A549 (cell line): ENCODE measurements at regions of chr3 and their contacts with region 1.

Region 1: DNA sequence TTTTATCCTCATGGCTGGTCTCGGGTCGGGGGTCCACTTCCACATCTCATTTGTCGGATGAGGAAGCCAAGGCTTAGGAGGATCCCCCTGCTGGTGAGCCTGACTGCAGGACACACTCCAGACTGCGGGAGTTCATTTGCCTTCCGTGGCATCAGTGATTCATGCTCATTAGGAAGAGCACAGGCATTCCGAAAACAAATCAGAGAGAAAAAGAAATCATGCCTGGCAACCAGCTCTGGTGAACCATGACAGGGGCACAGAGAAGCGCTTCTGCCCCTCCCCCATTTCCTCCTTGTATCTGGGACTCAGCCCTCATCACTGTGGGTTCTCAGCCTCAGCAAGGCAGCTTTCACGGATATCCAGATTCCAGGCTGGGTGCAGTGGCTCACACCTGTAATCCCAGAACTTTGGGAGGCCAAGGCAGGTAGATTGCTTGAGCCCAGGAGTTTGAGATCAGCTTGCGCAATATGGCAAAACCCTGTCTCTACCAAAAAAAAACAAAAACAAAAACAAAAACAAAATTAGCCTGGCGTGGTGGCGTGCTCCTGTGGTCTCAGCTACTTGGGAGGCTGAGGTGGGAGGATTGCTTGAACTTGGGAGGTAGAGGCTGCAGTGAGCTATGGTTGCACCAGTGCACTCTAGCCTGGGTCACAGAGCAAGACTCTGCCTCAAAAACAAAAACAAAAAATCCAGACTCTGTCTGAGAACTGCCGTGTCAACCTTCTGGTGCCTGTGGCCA is 28.4 kb downstream of the IRAK2 start:
- DNase-seq: peak; percentile 60 to 82
- ATAC-seq: peak; percentile 51 to 70
- H3K4me3 ChIP-seq: no peak overlapping the region
- H3K27ac ChIP-seq: peak overlapping the region; percentile 88
- H3K4me1 ChIP-seq: peaks cover 76% of the 10 kb centered on the region
- CTCF ChIP-seq: peak; percentile 47
- EP300 ChIP-seq: no peak
- POLR2A ChIP-seq: no peak
- RAD21 ChIP-seq: peak; percentile 10 to 34; a peak in 2 of 5 replicates

Region 2: GRCh38 chr3:10142707-10143566 is 50.2 kb before region 1 on chr3:
- CTCF ChIA-PET with region 1: interaction called, 3 read pairs
- POLR2A ChIA-PET with region 1: interaction called, 11 read pairs
- DNase-seq: peak; percentile 26 to 35
- ATAC-seq: peak in 1 of 2 experiments; percentile 12; a peak in 3 of 6 replicates
- H3K4me3 ChIP-seq: peak overlapping the region; percentile 87
- H3K27ac ChIP-seq: peak overlapping the region; percentile 90 to 97
- H3K4me1 ChIP-seq: peaks cover 15% of the 10 kb centered on the region
- CTCF ChIP-seq: no peak
- EP300 ChIP-seq: no peak
- POLR2A ChIP-seq: no peak
- RAD21 ChIP-seq: no peak

Region 3: DNA sequence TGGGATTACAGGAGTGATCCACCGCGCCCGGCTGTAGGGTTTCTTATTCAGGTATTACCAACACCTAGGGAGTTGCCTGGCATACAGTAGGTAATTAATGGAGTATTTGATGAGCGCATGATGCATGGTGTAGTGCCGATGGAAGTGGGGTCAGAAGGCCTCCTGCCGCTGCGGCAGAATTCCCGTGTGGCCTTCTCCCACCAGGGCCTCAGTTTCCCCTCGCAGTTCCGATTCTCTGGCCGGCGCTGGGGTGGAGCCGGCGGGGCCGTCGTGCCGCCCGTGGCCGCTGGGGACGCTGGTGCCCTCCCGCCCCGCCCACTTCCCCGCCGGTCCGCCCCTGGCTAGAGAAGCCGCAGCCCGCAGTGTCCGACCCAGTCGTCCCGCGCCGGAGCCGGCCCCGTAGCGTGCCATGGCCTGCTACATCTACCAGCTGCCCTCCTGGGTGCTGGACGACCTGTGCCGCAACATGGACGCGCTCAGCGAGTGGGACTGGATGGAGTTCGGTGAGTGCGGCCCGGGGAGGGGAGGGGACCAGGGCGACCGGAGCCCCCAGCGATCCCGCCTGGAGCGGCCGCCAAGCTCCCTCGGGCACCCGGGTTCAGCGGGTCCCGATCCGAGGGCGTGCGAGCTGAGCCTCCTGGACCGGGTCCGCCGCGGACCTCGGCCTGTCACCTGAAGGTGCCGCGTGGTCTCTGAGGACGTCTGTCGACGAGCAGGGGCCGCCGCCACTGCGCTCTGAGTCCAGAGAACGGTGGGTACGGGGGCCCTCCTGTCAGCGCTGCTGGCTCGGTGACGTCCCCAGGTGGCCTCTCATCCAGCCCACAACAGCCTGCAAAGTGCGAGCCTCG is 28.4 kb before region 1 on chr3 and contains the start of gene IRAK2:
- CTCF ChIA-PET with region 1: interaction called, 16 read pairs
- POLR2A ChIA-PET with region 1: interaction called, 11 read pairs
- DNase-seq: peak; percentile 67 to 68
- ATAC-seq: peak; percentile 90 to 92
- H3K4me3 ChIP-seq: peak within 1 kb of the TSS; percentile 73
- H3K27ac ChIP-seq: peak within 1 kb of the TSS; percentile 78 to 89
- H3K4me1 ChIP-seq: peaks cover 13% of the 10 kb centered on the region
- CTCF ChIP-seq: peak; percentile 68
- EP300 ChIP-seq: no peak
- POLR2A ChIP-seq: peak; percentile 91
- RAD21 ChIP-seq: peak; percentile 2 to 56; a peak in 3 of 5 replicates
- polyA plus RNA-seq, gene IRAK2: 12.5 and 15.3 TPM in 2 replicates

Region 4: DNA sequence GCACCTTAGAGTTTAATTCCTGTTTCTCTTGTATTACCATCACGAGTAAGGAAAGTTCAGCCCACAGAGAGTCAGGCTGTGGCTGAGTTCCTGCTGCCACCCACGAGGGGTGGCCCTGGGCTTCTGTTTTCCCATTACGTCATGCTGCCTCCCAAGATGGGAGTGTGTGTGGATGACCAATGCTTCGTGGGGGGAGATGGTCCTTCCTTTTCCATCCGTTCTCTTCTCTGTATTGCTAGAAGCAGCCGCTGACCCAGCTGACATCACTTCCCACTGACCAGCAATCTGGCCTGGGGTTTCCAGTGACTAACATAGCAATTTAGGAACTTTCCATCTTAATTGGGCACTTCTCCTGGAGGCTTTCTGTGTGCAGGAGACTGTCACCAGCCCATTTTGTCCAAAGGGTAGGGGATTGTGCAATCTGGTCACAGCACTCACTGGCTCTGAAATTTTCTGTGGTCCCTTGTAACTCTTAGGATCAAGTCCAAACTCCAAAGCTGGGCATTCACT is 19.1 kb before region 1 on chr3:
- CTCF ChIA-PET with region 1: interaction called, 19 read pairs
- POLR2A ChIA-PET with region 1: interaction called, 9 read pairs
- DNase-seq: peak; percentile 62 to 77
- ATAC-seq: peak; percentile 79 to 93
- H3K4me3 ChIP-seq: no peak overlapping the region
- H3K27ac ChIP-seq: peak overlapping the region; percentile 72 to 81
- H3K4me1 ChIP-seq: peaks cover 45% of the 10 kb centered on the region
- CTCF ChIP-seq: no peak
- EP300 ChIP-seq: peak; percentile 18 to 66; a peak in 2 of 5 replicates
- POLR2A ChIP-seq: no peak
- RAD21 ChIP-seq: no peak

Region 5: DNA sequence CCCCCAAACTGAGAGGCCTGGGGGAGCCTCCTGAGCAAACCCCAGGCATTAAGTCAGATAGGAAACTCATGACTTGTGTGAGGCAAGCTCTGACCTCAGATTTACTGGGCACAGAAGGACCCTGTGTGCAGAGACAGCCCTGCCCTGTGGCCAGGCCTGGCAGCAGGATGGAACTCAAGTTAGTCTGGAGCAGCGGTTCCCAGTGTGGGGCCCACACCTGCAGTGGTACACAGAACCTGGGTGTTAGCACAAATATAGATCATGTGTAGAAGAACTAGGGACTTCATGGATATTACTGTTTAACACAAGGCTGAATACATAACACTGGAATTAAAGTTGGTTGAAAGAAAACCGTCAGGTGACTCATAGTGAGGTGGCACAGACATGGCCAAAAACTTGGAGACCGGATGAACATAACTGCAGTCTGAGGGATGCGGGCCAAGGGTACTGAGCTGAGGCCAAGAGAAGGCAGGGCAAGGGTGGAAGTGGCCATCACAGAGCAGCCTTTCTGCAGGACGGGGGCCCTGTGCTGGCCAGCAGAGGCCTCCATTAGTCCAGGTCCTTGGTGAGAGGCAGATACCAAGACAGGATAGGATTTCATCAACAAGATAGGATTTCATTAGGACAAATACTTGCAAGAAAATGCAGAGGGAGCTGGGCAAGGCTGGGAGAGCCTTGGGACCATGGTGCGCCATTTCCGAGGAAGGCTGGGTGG is 12.5 kb after region 1 on chr3:
- CTCF ChIA-PET with region 1: interaction called, 88 read pairs
- POLR2A ChIA-PET with region 1: interaction called, 43 read pairs
- DNase-seq: peak; percentile 82 to 83
- ATAC-seq: peak; percentile 84 to 88
- H3K4me3 ChIP-seq: no peak overlapping the region
- H3K27ac ChIP-seq: peak overlapping the region; percentile 83 to 89
- H3K4me1 ChIP-seq: peaks cover 58% of the 10 kb centered on the region
- CTCF ChIP-seq: no peak
- EP300 ChIP-seq: peak; percentile 14 to 51; a peak in 2 of 5 replicates
- POLR2A ChIP-seq: no peak
- RAD21 ChIP-seq: 0 out of 5 replicates have a peak, but pooled peaks of 1 of the 2 experiments have one; percentile 18

Region 6: GRCh38 chr3:10224784-10225665 is 31.9 kb after region 1 on chr3:
- CTCF ChIA-PET with region 1: interaction called, 24 read pairs
- POLR2A ChIA-PET with region 1: interaction called, 3 read pairs
- DNase-seq: peak; percentile 78 to 84
- ATAC-seq: peak; percentile 83 to 85
- H3K4me3 ChIP-seq: no peak overlapping the region
- H3K27ac ChIP-seq: peak overlapping the region; percentile 23 to 84; a peak in 3 of 6 replicates
- H3K4me1 ChIP-seq: peaks cover 43% of the 10 kb centered on the region
- CTCF ChIP-seq: peak; percentile 94
- EP300 ChIP-seq: peak in 1 of 2 experiments; percentile 24; a peak in 1 of 5 replicates
- POLR2A ChIP-seq: no peak
- RAD21 ChIP-seq: peak; percentile 97 to 99

Region 7: GRCh38 chr3:10263646-10264363 is 70.7 kb after region 1 on chr3:
- CTCF ChIA-PET with region 1: interaction called, 11 read pairs
- POLR2A ChIA-PET with region 1: no interaction called
- DNase-seq: peak; percentile 58 to 79
- ATAC-seq: peak; percentile 98 to 99
- H3K4me3 ChIP-seq: no peak overlapping the region
- H3K27ac ChIP-seq: no peak overlapping the region
- H3K4me1 ChIP-seq: 0 out of 3 replicates have a peak, but pooled peaks cover 3% of the 10 kb centered on the region
- CTCF ChIP-seq: peak; percentile 3; the same call in 2 of the 3 replicates
- EP300 ChIP-seq: no peak
- POLR2A ChIP-seq: no peak
- RAD21 ChIP-seq: 0 out of 5 replicates have a peak, but pooled peaks of 1 of the 2 experiments have one; percentile 20